Gastrocnemius medialis (tissue), 4 donors: ENCODE measurements at regions of chr5 and their contacts with region 1.

Region 1: DNA sequence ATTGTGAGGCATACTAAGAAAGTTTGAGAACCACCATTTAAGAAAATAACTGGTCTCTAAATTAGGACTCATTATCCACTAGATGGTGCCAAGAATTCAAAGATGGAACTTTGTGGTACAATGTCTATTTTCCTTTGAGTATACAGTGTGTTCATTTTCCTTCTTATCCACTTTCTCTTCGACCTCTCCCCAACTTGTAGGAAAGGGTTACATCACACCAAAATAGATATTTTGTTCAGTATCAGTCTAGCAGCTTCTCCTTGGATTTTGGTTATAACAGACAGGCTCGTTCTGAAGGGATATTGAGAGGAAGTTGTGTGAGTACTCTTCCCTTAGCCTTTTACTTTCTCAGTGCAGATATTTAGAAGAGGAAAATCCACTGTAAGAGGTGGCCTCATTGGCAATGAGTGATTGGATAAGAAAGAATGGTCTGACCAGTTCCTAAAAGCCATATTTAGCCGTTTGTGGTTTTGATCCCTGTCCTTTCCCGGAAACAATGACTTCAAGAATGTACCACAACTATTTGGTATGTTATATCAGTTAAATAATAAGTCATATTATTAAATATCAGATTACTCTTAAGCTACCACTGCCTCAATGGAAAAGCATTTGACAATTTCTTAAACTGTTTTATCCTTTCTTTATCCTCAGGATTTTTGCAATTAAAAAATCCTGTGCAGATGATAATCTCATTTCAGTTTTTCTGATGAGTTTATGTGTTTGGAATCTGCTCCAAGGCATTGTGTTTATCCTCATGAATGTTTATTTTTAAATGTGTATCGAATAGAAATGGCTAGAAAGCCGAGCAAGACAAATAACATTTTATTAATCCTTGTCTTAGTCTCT is 69.0 kb upstream of the GRAMD2B start:
- DNase-seq: no peak
- ATAC-seq: peak; percentile 88 to 93
- H3K4me3 ChIP-seq: peak overlapping the region in 2 of 4 donors; percentile 8 to 22
- H3K27ac ChIP-seq: peak overlapping the region in 3 of 4 donors; percentile 14 to 36 (median 20)
- H3K4me1 ChIP-seq: peaks cover 0 to 7% of the 10 kb centered on the region in 2 donors
- H3K27me3 ChIP-seq: no peaks in the 10 kb centered on the region
- CTCF ChIP-seq: peak; percentile 25 to 58 (median 55)
- POLR2A ChIP-seq: no peak

Region 2: GRCh38 chr5:125928663-125929062 is 425.6 kb before region 1 on chr5:
- in situ Hi-C with region 1: no loop called
- intact Hi-C with region 1: no loop called
- DNase-seq: no peak
- ATAC-seq: no peak
- H3K4me3 ChIP-seq: no peak overlapping the region
- H3K27ac ChIP-seq: no peak overlapping the region
- H3K4me1 ChIP-seq: no peaks in the 10 kb centered on the region
- H3K27me3 ChIP-seq: no peaks in the 10 kb centered on the region
- CTCF ChIP-seq: no peak
- POLR2A ChIP-seq: no peak

Region 3: GRCh38 chr5:126138281-126138931 is 215.8 kb before region 1 on chr5:
- in situ Hi-C with region 1: no loop called
- intact Hi-C with region 1: no loop called
- DNase-seq: no peak
- ATAC-seq: no peak
- H3K4me3 ChIP-seq: no peak overlapping the region
- H3K27ac ChIP-seq: no peak overlapping the region
- H3K4me1 ChIP-seq: no peaks in the 10 kb centered on the region
- H3K27me3 ChIP-seq: no peaks in the 10 kb centered on the region
- CTCF ChIP-seq: no peak
- POLR2A ChIP-seq: no peak

Region 4: GRCh38 chr5:126384985-126385384 is 30.8 kb after region 1 on chr5:
- in situ Hi-C with region 1: no loop called
- intact Hi-C with region 1: no loop called
- DNase-seq: no peak
- ATAC-seq: peak; percentile 64 to 87
- H3K4me3 ChIP-seq: no peak overlapping the region
- H3K27ac ChIP-seq: peak overlapping the region; percentile 59 to 75 (median 64)
- H3K4me1 ChIP-seq: peaks cover 32 to 35% of the 10 kb centered on the region in 2 donors
- H3K27me3 ChIP-seq: no peaks in the 10 kb centered on the region
- CTCF ChIP-seq: no peak
- POLR2A ChIP-seq: no peak

Region 5: DNA sequence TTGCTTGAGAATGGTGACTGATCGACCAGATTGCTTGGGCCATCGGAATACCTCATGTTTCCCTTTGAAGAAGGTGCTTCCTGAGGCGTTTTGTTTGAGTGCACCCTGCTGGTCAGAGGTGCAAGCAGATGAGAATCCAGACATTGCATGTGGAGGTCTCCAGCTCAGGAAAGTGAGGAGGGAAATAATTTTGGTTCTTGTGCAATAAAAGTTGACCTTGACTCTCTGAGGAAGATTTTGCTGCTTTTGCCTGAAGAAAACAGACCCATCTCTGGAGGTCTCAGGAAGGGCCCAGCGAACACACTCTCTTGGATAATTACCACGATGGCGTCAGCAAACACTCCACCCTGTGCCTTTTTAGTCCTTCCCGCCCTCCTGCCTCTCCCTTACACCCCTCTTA is 138.7 kb after region 1 on chr5:
- in situ Hi-C with region 1: no loop called
- intact Hi-C with region 1: loop called (anchors 2 kb)
- DNase-seq: no peak
- ATAC-seq: no peak
- H3K4me3 ChIP-seq: no peak overlapping the region
- H3K27ac ChIP-seq: no peak overlapping the region
- H3K4me1 ChIP-seq: no peaks in the 10 kb centered on the region
- H3K27me3 ChIP-seq: no peaks in the 10 kb centered on the region
- CTCF ChIP-seq: peak in 3 of 5 experiments; percentile 7 to 37 (median 7)
- POLR2A ChIP-seq: no peak

Region 6: GRCh38 chr5:126536874-126537273 is 182.6 kb after region 1 on chr5:
- in situ Hi-C with region 1: loop called (anchors 5 kb)
- intact Hi-C with region 1: loop called (anchors 1 kb)
- DNase-seq: no peak
- ATAC-seq: peak in 1 of 2 donors; percentile 49
- H3K4me3 ChIP-seq: no peak overlapping the region
- H3K27ac ChIP-seq: no peak overlapping the region
- H3K4me1 ChIP-seq: no peaks in the 10 kb centered on the region
- H3K27me3 ChIP-seq: no peaks in the 10 kb centered on the region
- CTCF ChIP-seq: no peak
- POLR2A ChIP-seq: no peak

Region 7: GRCh38 chr5:126544087-126544740 is 190.0 kb after region 1 on chr5:
- in situ Hi-C with region 1: loop called (anchors 5 kb)
- intact Hi-C with region 1: loop called (anchors 1 kb)
- DNase-seq: no peak
- ATAC-seq: no peak
- H3K4me3 ChIP-seq: no peak overlapping the region
- H3K27ac ChIP-seq: no peak overlapping the region
- H3K4me1 ChIP-seq: no peaks in the 10 kb centered on the region
- H3K27me3 ChIP-seq: no peaks in the 10 kb centered on the region
- CTCF ChIP-seq: no peak
- POLR2A ChIP-seq: no peak